Posterior cingulate gyrus (tissue), 11 donors: ENCODE measurements at regions of chr12 and their contacts with region 1.

Region 1: DNA sequence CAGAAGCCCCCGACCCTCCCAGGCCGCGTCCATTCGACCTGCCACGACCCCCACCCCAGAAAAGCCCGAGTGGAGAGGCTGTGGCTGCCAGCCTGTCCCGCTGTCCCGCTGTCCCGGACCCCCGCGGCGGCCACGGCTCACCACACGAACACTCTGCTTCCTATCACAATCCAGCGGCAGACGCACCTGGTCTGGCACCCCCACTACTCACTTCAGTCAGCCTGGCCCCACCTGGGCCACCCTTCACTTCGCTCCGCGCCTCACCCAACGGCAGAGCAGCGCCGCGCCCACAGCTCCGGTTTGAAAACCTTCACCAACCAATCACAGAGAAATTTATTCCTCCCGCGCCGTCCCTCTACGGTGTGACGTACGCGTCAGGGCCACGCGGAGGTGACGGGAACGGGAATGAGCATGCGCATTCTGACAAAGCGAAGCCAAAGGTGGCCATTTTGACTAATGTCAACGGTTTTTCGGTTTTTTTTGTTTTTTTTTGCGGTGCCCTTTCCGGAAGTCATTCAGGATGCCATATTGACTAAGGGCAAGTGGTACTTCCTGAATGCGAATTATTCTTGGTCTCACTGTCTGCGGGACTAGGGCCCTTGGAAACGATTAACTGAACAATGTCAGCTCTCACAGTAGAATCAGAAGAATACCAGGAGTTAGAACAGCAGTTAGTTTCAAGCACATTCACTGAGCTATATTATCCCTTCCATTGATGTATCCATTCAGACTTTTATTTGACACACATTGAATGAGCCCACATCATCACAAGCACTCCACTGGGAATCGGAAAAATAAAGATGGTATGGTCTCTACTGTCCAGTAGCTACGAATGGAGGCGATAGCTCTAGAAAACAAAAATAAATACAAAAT is at the start of gene RACGAP1:
- DNase-seq: peak; percentile 88 to 98 (median 92)

Region 2: DNA sequence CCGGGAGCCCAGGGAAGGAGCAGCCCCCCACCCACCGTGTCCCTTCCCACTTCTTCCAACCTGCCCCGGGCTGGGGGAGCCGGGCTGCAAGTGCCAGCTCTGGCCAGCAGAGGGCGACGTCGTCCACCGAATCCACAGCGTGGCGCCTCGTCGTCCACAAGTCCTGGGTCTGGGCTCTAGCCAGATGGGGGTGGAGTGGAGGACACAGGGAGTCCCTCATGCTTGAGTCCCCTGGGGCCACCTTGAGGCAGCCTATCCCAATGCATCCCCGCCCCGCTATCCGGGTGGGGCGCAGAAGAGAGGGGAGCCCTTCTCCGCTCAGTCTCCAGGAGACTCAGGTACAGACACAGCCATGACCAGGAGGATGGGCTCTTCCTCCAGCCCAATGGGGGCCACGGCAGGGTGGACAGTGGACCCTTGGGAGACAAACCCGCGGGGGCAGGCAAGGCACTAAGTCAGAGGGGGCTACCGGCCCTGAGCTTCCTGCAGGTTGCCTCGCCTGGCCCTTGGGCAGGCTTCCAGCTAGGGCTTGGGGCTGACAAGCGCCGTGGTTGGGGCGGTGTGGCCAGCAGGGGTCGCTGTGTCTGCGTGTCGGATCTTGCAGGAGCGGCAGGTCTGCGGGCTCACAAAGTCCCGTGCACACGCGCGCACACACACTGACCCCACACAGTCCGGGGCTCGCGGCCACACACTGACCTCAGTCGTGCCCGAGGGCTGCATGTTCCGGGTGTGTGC is 58.2 kb before region 1 on chr12:
- intact Hi-C with region 1: no loop called
- DNase-seq: peak; percentile 84 to 99 (median 96)

Region 3: DNA sequence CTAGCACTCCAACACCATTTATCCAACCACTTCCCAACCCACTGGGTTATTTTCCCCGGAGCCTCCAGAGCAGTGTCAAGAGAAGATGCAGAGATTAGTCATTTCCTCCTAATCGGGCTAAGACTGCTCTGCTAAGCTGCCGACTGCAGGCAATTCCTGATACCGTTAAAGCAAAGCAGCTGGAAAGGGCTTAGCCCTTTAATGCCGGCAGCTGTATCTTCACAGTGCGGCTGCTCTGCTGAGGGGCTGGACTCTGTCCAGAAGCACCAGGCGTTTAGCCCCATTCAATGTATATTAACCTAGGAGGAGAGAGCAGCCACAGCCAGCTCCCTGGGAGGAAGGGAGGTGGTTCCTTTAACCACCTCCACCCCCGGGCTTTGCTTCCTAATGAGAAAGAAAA is 41.5 kb before region 1 on chr12:
- intact Hi-C with region 1: loop called (anchors 5 kb)
- DNase-seq: peak in 1 of 10 donors; percentile 79